Prostate gland (tissue), 2 donors: ENCODE measurements at regions of chr3 and their contacts with region 1.

Region 1: DNA sequence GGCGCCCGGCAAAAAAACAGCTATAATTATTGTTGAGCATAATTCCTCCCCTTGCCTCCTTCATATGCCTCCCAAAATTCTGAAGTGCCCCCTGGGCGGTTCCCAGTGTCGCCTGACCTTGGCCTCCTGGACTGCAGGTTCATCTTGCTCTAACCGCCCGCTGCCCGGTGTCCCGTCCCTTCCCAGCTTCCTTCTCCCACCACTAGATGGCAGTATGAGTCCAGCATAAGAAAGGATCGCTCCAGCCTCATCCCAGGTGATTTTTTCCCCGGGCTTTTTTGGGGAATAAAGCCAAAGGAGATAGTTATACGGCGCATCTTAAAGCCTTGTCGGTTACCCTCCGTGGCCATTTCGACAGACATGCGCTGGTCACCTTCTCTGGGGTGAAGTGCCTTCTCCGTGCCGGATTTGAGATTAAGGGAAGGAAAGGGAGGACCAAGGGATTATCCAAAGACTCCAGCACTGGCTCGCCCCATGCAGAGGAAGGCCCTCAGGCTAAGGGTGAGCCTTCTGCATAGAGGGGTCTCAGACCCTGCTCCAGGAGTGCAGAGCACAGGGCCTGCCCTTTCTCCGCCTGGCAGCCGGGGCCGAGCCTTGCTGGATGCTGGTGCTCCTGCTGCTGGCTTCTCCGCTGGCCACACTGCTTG is 45.8 kb upstream of the TRA2B start:
- DNase-seq: peak; percentile 66
- H3K4me3 ChIP-seq: no peak overlapping the region
- H3K27ac ChIP-seq: no peak overlapping the region
- H3K4me1 ChIP-seq: no peaks in the 10 kb centered on the region
- H3K27me3 ChIP-seq: no peaks in the 10 kb centered on the region
- CTCF ChIP-seq: peak; percentile 85 to 93 (median 88)
- POLR2A ChIP-seq: no peak

Region 2: DNA sequence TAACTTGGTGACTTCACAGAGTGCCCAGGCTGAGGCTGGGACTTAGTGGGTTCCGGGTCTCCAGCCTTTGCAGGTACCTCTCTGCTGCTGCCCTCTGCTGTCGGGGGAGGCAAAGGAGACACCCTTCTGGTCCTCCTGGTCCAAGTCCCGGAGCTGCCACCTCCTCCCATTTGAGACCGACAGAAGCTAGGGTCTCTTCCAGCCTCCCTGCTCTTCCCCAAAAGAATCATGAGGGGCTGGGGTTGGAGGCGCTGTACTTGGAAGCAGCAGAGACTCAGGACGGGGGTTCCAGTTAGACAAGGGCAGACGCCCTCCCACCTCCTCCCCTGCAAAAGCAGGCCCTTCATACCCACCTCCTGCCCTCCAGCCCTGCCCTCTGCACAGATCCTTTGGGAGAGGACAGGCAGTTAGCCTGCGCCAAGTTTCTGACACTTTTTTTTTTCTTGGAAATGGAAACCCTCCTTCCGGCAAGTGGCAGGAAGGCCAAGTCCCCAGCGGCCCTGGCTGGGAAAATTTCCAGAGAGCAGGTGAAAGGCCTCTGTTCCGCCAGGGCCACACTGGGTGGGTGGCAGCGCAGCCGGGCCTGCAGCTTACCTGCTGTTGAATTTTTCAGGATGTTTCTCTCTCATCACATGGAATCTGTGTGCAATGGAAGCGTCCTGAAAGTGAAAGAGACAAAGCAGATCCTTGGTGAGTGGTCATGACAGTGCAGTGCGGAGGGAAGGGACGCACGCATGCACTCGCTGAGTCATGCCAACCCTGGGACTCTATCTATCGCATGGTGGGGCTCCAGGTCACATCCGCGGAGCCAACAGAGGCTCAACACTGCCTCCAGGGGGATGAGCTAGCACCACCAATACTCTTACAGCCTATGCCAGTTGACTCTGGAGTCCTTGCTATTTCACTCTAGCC is 258.5 kb after region 1 on chr3:
- intact Hi-C with region 1: loop called (anchors 5 kb)
- DNase-seq: peak; percentile 54
- H3K4me3 ChIP-seq: no peak overlapping the region
- H3K27ac ChIP-seq: no peak overlapping the region
- H3K4me1 ChIP-seq: no peaks in the 10 kb centered on the region
- H3K27me3 ChIP-seq: no peaks in the 10 kb centered on the region
- CTCF ChIP-seq: peak in 3 of 4 experiments; percentile 45 to 48 (median 47)
- POLR2A ChIP-seq: no peak

Region 3: DNA sequence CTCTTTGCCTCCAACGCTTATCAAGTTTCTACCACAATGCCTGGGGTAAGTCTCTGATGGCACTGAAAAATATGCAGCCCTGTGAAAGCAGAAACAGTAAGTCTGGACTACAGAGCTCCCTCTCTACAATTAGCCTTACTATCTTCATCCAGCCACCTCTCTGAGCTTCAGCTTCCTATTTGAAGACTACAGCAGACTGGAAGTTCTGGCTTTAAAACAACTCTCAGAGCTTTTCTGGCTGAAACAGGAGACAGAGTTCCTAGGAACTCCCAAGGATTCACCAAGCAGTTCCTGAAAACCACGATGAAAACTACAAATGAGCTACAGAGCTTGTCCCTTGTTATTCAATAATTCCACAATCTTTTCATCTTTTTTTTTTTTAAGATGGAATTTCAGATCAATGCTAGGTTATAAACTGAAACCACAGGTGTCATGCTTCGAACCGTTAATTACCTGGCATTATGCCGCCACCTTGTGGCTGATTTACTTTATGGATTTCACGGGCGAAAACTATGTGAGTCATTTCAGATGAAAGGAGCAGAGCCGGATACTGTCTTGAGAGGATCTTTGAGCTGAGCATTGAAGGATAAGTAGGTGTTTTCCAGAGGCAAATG is 556.7 kb after region 1 on chr3:
- intact Hi-C with region 1: loop called (anchors 5 kb)
- DNase-seq: peak; percentile 77
- H3K4me3 ChIP-seq: no peak overlapping the region
- H3K27ac ChIP-seq: no peak overlapping the region
- H3K4me1 ChIP-seq: no peaks in the 10 kb centered on the region
- H3K27me3 ChIP-seq: no peaks in the 10 kb centered on the region
- CTCF ChIP-seq: peak; percentile 65 to 85 (median 80)
- POLR2A ChIP-seq: no peak

Region 4: GRCh38 chr3:186617038-186617946 is 633.7 kb after region 1 on chr3:
- intact Hi-C with region 1: loop called (anchors 5 kb)
- DNase-seq: peak; percentile 88
- H3K4me3 ChIP-seq: no peak overlapping the region
- H3K27ac ChIP-seq: no peak overlapping the region
- H3K4me1 ChIP-seq: no peaks in the 10 kb centered on the region
- H3K27me3 ChIP-seq: no peaks in the 10 kb centered on the region
- CTCF ChIP-seq: peak; percentile 62 to 93 (median 78)
- POLR2A ChIP-seq: no peak